ENCODE measurements at regions of chr9 and their contacts with region 1.

Region 1: DNA sequence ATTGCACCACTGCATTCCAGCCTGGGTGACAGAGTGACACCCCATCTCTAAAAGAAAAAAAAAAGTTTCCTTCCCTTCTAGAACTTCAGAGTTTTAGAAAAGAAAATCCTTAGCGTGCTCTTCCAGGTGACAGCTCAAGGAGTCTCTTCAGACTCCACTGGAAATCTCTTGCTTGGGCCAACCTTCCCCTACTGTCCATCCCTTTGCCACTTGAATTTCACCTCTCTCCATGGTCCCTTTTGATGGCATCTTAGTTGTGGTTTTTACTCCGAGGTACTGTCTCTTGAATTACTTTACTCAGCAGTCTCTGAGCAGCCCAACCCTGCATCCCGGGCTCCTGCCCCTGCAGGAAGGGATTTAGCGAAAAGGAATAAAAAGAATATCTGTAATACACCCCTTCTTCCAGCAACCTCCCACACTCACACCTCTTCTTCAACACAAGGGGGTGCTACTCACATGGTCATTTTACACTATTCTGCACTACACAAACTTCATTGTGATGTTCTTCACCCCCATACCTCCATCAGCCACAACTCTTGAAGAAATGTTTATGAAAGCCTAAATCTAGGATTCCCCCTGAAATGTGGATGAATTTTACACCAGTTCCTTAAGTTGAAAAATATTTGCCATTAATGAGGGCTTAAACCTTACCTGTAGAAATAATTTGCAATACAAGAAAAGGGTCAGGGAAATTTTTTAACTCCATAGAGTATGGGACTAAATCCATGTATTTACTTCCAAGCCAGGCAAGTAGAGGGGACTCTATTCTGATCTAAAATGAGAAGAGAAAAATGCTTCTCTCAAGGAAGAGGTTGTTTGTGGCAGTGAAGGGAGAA is 25.9 kb downstream of the TPD52L3 start:
- DNase-seq: no peak
- ATAC-seq: peak; percentile 83

Region 2: DNA sequence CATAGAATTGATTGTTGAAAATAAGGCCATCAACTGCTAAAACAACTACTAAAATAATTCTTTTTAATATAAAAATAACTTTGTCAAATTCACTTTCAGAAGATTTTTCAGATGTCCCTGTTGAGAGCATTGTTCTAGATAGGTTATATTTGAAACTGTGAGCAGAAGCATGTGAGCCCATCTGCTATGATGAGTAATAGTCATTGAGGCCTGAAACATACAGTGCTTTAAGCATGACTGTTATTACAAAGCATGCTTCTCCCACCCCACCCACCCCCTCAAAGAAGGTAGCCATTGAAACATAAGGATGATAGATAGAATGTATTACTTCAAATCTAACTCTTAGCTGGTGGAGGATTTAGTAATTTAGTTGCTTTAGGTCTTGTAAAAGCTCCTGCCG is 144.9 kb after region 1 on chr9:
- intact Hi-C with region 1: loop called (anchors 10 kb)
- DNase-seq: no peak
- ATAC-seq: no peak

Region 3: GRCh38 chr9:6566409-6567139 is 212.5 kb after region 1 on chr9:
- intact Hi-C with region 1: loop called (anchors 2 kb)
- DNase-seq: no peak
- ATAC-seq: no peak

Region 4: DNA sequence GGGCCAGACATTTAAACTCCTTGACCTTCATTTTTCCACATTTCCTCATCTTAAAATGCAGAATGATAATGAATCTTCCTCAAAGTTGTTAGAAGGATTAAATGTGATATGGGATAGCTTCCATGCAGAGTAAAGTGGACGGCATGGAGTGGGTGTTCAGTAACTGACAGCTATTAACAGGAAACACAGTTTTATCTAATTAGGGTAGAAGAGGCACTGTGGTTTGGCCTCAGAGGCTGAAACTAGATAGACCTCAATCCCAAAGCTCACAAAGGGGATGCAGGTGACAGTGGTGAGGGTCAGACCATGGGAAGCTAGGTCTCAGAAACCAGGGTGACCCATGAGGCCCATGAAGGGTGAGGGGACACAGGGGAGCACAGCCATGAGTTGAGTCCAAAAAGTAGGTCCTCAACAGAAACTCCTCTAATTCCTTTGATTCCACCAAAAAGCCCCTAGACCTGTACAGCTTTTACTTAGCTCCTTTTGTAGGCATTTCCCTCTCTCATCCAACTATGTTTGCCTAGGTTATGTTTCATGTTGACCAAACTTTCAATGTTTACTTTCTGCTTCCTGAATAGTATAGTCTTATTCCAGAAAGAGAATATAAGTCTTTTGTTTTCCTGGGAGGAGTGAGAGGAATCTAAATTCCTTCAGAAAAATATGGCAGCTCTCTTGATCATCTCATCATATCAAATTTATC is 319.4 kb after region 1 on chr9:
- intact Hi-C with region 1: loop called (anchors 10 kb)
- DNase-seq: no peak
- ATAC-seq: no peak